ENCODE measurements at regions of chr1 and their contacts with region 1.

Region 1: GRCh38 chr1:57418971-57419370 is 4.9 kb downstream of the DAB1 start:
- DNase-seq: no peak
- ATAC-seq: no peak
- H3K4me3 ChIP-seq: no peak overlapping the region
- H3K27ac ChIP-seq: no peak overlapping the region
- H3K4me1 ChIP-seq: no peaks in the 10 kb centered on the region
- H3K27me3 ChIP-seq: no peaks in the 10 kb centered on the region

Region 2: GRCh38 chr1:57112148-57112547 is 306.8 kb before region 1 on chr1:
- intact Hi-C with region 1: loop called in 1 of 4 experiments (anchors 5 kb)
- DNase-seq: no peak
- ATAC-seq: no peak
- H3K4me3 ChIP-seq: no peak overlapping the region
- H3K27ac ChIP-seq: no peak overlapping the region
- H3K4me1 ChIP-seq: peaks cover 5% of the 10 kb centered on the region
- H3K27me3 ChIP-seq: no peaks in the 10 kb centered on the region

Region 3: GRCh38 chr1:57340334-57341070 is 78.5 kb before region 1 on chr1:
- intact Hi-C with region 1: no loop called
- DNase-seq: no peak
- ATAC-seq: no peak
- H3K4me3 ChIP-seq: no peak overlapping the region
- H3K27ac ChIP-seq: no peak overlapping the region
- H3K4me1 ChIP-seq: no peaks in the 10 kb centered on the region
- H3K27me3 ChIP-seq: no peaks in the 10 kb centered on the region

Region 4: GRCh38 chr1:57357462-57357861 is 61.5 kb before region 1 on chr1:
- intact Hi-C with region 1: no loop called
- DNase-seq: no peak
- ATAC-seq: no peak
- H3K4me3 ChIP-seq: no peak overlapping the region
- H3K27ac ChIP-seq: no peak overlapping the region
- H3K4me1 ChIP-seq: no peaks in the 10 kb centered on the region
- H3K27me3 ChIP-seq: no peaks in the 10 kb centered on the region